GM12878 (cell line): ENCODE measurements at regions of chr10 and their contacts with region 1.

Region 1: DNA sequence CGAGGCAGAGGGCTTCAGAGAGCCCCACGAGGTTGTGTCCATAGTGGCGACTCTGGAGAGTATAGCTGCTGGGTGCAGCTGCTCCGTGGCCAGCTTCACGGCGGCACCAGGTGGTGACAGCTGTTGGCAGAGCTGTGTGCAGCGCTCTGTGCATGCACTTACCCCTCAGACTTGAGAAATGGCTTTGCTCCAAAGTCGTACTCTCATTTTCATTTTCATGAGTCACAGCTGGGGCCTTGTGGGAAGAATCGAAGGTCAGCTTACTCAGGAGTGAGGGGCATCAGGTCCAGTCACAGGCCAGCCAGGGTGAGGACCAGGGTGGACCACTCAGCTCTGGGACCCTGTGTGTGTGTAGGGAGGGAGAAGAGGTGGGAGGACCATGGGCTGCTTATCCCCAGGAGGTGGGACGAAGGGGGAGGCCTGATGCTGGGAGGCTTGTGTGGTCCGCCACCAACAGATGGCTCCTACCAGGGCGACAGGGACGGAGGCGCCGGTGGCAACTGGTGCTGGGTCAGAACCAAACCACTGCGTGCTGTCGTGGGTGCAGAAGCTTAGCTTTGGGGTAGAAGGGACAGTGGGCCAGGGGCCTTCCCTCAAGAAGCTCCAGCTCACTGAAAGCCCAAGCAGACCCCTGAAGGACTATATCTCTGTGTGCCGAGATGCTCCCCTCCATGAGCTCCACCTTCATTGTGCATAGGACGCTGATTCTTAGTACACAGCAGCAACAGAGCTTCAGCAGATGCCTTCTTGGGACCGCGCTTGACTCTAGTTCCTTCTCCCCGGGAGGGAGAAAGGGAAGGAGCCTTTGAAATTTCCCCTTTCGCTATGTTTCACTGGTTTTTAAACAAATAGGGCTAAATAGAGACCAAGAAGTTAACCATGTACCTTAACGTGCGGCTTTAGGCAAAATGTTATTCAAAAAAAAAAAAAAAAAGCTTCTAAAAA is 225.0 kb downstream of the CELF2 start:
- DNase-seq: peak; percentile 90
- ATAC-seq: peak; percentile 58
- H3K4me3 ChIP-seq: peak overlapping the region; percentile 57
- H3K27ac ChIP-seq: peak overlapping the region; percentile 97
- H3K4me1 ChIP-seq: peaks cover 80% of the 10 kb centered on the region
- H3K27me3 ChIP-seq: no peaks in the 10 kb centered on the region
- CTCF ChIP-seq: peak in 1 of 3 experiments; percentile 40; a peak in 2 of 6 replicates
- EP300 ChIP-seq: peak in 1 of 2 experiments; percentile 85; a peak in 2 of 4 replicates
- POLR2A ChIP-seq: peak; percentile 86
- RAD21 ChIP-seq: peak; percentile 2; the same call in 1 of the 2 replicates

Region 2: GRCh38 chr10:11106621-11107374 is 135.9 kb before region 1 on chr10:
- CTCF ChIA-PET with region 1: no interaction called
- POLR2A ChIA-PET with region 1: no interaction called
- RAD21 ChIA-PET with region 1: no interaction called
- SMC1A ChIA-PET with region 1: no interaction called
- in situ Hi-C with region 1: no loop called
- intact Hi-C with region 1: loop called (anchors 5 kb)
- DNase-seq: peak; percentile 42
- ATAC-seq: peak; percentile 88
- H3K4me3 ChIP-seq: no peak overlapping the region
- H3K27ac ChIP-seq: no peak overlapping the region
- H3K4me1 ChIP-seq: peaks cover 18% of the 10 kb centered on the region
- H3K27me3 ChIP-seq: no peaks in the 10 kb centered on the region
- CTCF ChIP-seq: no peak
- EP300 ChIP-seq: no peak
- POLR2A ChIP-seq: no peak
- RAD21 ChIP-seq: no peak

Region 3: GRCh38 chr10:11145495-11145855 is 97.2 kb before region 1 on chr10:
- CTCF ChIA-PET with region 1: interaction called, 6 read pairs
- POLR2A ChIA-PET with region 1: interaction called, 4 read pairs
- RAD21 ChIA-PET with region 1: interaction called, 10 read pairs
- SMC1A ChIA-PET with region 1: interaction called, 5 read pairs
- in situ Hi-C with region 1: no loop called
- intact Hi-C with region 1: no loop called
- DNase-seq: no peak
- ATAC-seq: peak; percentile 92
- H3K4me3 ChIP-seq: peak overlapping the region; percentile 25; the same call in 1 of the 2 replicates
- H3K27ac ChIP-seq: peak overlapping the region; percentile 68
- H3K4me1 ChIP-seq: peaks cover 16% of the 10 kb centered on the region
- H3K27me3 ChIP-seq: no peaks in the 10 kb centered on the region
- CTCF ChIP-seq: no peak
- EP300 ChIP-seq: no peak
- POLR2A ChIP-seq: peak; percentile 25; the same call in 1 of the 2 replicates
- RAD21 ChIP-seq: no peak

Region 4: DNA sequence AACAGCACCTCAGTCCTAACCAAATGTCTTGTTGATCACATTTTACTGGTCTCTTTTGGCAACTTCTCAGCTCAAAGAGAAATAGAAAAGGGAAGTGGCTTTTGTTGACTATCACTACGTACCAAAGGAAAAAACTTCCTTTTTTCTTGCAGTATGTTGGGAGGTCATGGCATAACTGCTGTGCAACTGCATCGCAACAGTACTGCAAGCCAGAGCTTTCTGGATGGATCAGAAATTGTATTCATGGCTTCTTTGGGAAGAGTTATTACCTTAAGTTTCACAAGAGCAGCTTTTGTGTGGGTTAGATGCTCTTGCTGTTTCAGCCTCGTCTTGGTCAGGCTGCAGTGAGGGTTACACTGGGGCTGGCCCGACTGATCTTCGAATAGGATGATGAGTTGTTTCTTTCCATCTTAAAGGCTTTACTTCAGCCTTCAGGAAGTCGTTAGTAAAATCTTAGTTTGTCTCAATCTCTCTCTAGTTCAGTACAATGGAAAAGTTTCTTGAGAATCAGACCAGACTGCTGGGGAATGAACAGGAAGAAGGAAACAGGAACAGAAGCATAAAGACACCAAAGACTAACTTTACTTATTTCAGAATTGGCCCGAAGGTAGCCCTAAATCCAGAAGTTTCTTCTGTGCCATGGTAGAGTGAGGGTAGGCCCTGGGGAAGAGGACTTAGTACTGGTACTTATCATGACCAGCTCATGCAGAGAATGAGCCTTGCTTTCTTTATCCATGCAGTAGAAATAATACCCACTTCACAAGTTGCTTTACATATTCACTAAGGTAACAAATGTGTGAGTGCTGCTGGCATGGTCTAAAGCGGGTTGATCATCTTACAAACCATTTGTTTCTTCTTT is 71.5 kb before region 1 on chr10:
- CTCF ChIA-PET with region 1: interaction called, 89 read pairs
- POLR2A ChIA-PET with region 1: interaction called, 130 read pairs
- RAD21 ChIA-PET with region 1: interaction called, 212 read pairs
- SMC1A ChIA-PET with region 1: interaction called, 417 read pairs
- in situ Hi-C with region 1: no loop called
- intact Hi-C with region 1: no loop called
- DNase-seq: no peak
- ATAC-seq: peak; percentile 23
- H3K4me3 ChIP-seq: peak overlapping the region; percentile 96
- H3K27ac ChIP-seq: peak overlapping the region; percentile 95
- H3K4me1 ChIP-seq: peaks cover 26% of the 10 kb centered on the region
- H3K27me3 ChIP-seq: no peaks in the 10 kb centered on the region
- CTCF ChIP-seq: no peak
- EP300 ChIP-seq: 0 out of 4 replicates have a peak, but pooled peaks of 1 of the 2 experiments have one; percentile 14
- POLR2A ChIP-seq: peak; percentile 33; the same call in 1 of the 2 replicates
- RAD21 ChIP-seq: no peak

Region 5: DNA sequence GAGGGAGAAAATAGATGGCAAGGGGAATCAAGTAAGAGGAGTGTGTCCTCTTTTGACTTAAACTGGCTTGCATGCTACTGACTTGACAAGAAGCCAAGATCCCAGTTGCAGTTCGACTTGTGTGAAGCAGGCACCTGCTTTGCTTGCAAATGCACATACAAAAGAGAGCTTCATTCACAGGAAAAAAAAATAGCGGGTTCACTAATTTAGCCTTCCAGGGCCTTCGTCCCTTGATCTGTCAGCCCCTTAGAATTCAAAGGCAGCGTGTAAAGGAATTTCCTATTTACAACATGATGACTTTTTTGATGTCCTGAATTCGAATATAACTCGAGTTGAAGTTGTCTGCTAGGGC is 32.9 kb before region 1 on chr10:
- CTCF ChIA-PET with region 1: interaction called, 4 read pairs
- POLR2A ChIA-PET with region 1: interaction called, 16 read pairs
- RAD21 ChIA-PET with region 1: interaction called, 45 read pairs
- SMC1A ChIA-PET with region 1: interaction called, 57 read pairs
- in situ Hi-C with region 1: no loop called
- intact Hi-C with region 1: loop called (anchors 1 kb)
- DNase-seq: no peak
- ATAC-seq: peak; percentile 35
- H3K4me3 ChIP-seq: peak overlapping the region; percentile 7
- H3K27ac ChIP-seq: peak overlapping the region; percentile 92
- H3K4me1 ChIP-seq: peaks cover 86% of the 10 kb centered on the region
- H3K27me3 ChIP-seq: no peaks in the 10 kb centered on the region
- CTCF ChIP-seq: no peak
- EP300 ChIP-seq: no peak; a peak in 1 of 4 replicates
- POLR2A ChIP-seq: no peak
- RAD21 ChIP-seq: no peak

Region 6: GRCh38 chr10:11255796-11256444 is 13.2 kb after region 1 on chr10:
- CTCF ChIA-PET with region 1: interaction called, 3 read pairs
- POLR2A ChIA-PET with region 1: interaction called, 16 read pairs
- RAD21 ChIA-PET with region 1: interaction called, 4 read pairs
- SMC1A ChIA-PET with region 1: interaction called, 8 read pairs
- in situ Hi-C with region 1: no loop called
- intact Hi-C with region 1: no loop called
- DNase-seq: no peak
- ATAC-seq: peak; percentile 68
- H3K4me3 ChIP-seq: no peak overlapping the region
- H3K27ac ChIP-seq: peak overlapping the region; percentile 54
- H3K4me1 ChIP-seq: peaks cover 47% of the 10 kb centered on the region
- H3K27me3 ChIP-seq: no peaks in the 10 kb centered on the region
- CTCF ChIP-seq: no peak
- EP300 ChIP-seq: peak in 1 of 2 experiments; percentile 22; a peak in 1 of 4 replicates
- POLR2A ChIP-seq: no peak; the same call in 1 of the 2 replicates
- RAD21 ChIP-seq: no peak

Region 7: GRCh38 chr10:11298116-11298515 is 55.4 kb after region 1 on chr10:
- CTCF ChIA-PET with region 1: no interaction called
- POLR2A ChIA-PET with region 1: no interaction called
- RAD21 ChIA-PET with region 1: no interaction called
- SMC1A ChIA-PET with region 1: no interaction called
- in situ Hi-C with region 1: no loop called
- intact Hi-C with region 1: no loop called
- DNase-seq: no peak
- ATAC-seq: no peak
- H3K4me3 ChIP-seq: no peak overlapping the region
- H3K27ac ChIP-seq: no peak overlapping the region
- H3K4me1 ChIP-seq: no peaks in the 10 kb centered on the region; the same call in 1 of the 2 replicates
- H3K27me3 ChIP-seq: no peaks in the 10 kb centered on the region
- CTCF ChIP-seq: no peak
- EP300 ChIP-seq: no peak
- POLR2A ChIP-seq: peak; percentile 47; the same call in 1 of the 2 replicates
- RAD21 ChIP-seq: no peak

Region 8: GRCh38 chr10:11345224-11346054 is 102.7 kb after region 1 on chr10:
- CTCF ChIA-PET with region 1: no interaction called
- POLR2A ChIA-PET with region 1: no interaction called
- RAD21 ChIA-PET with region 1: no interaction called
- SMC1A ChIA-PET with region 1: no interaction called
- in situ Hi-C with region 1: no loop called
- intact Hi-C with region 1: no loop called
- DNase-seq: peak; percentile 27
- ATAC-seq: peak; percentile 82
- H3K4me3 ChIP-seq: no peak overlapping the region
- H3K27ac ChIP-seq: no peak overlapping the region
- H3K4me1 ChIP-seq: no peaks in the 10 kb centered on the region
- H3K27me3 ChIP-seq: no peaks in the 10 kb centered on the region; a peak in 1 of 4 replicates
- CTCF ChIP-seq: peak; percentile 25 to 33 (median 29); a peak in 4 of 6 replicates
- EP300 ChIP-seq: no peak
- POLR2A ChIP-seq: no peak
- RAD21 ChIP-seq: peak; percentile 45